Right lobe of liver (tissue), 6 donors: ENCODE measurements at regions of chr17 and their contacts with region 1.

Region 1: DNA sequence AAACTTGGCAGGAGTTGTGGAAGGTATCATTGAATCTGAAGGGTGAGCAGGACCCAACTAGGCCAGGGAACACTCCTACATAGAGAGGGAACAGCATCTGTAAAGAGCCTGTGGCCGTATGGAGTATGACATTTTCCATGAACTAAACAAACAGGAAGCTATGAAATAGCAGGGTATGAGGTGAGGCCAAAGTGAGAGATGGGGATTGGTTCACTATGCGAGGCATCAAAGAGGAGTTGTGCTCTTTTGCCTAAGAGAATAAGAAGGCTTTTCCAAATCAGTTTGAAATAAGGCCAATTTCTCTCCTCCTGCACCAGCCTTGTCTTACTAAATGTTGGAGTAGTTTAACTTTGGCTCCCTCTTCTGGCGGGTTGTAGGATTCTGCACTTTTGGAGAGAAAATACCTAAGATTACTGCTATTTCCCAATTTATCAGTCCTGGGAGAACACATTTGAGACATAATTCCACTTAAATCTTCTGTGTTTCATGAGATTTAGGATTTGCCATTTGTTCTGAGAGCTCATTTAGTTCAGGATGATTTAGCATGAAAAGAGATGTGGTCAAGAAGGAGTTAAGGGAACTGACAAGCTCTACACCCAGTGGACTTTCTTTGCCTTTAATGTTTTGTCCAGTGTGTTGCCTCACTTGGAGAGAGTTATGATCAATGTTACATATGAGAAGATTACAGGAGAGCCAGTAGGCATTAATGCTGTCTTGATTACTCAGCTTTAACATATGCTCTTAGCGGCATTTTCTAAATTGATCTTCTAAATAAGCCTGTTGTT is 55.4 kb downstream of the TNRC6C start:
- DNase-seq: peak in 1 of 3 donors; percentile 54
- ATAC-seq: peak; percentile 78 to 86 (median 82)
- H3K4me3 ChIP-seq: no peak overlapping the region
- H3K27ac ChIP-seq: no peak overlapping the region
- H3K4me1 ChIP-seq: no peaks in the 10 kb centered on the region
- H3K27me3 ChIP-seq: no peaks in the 10 kb centered on the region
- CTCF ChIP-seq: peak; percentile 68 to 81 (median 74)
- POLR2A ChIP-seq: no peak

Region 2: DNA sequence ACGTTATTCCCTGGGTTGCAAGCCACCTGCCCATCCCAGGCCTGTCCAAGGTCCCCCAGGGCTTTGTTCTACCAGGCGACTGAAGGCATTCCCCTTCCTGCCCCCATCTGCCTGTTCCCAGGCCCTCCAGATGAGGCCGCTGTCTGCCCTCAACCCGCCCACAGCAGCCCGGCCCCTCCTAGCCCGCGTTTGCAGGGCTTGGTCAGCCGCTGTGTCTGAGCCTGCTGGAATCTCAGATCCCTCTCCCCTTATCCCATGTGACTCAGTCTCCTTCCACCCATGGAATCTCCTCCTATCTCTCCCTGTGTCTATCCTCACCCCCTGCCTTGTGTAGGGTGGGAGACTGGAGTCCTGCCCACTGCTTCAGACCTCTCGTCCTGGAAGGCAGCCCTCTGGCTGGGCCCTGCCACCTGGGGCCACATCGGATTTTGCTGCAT is 241.4 kb before region 1 on chr17:
- intact Hi-C with region 1: loop called in 1 of 2 experiments (anchors 10 kb)
- DNase-seq: peak; percentile 58 to 67 (median 65)
- ATAC-seq: peak; percentile 79 to 95 (median 89)
- H3K4me3 ChIP-seq: no peak overlapping the region
- H3K27ac ChIP-seq: no peak overlapping the region
- H3K4me1 ChIP-seq: no peaks in the 10 kb centered on the region
- H3K27me3 ChIP-seq: no peaks in the 10 kb centered on the region
- CTCF ChIP-seq: peak; percentile 48 to 68 (median 61)
- POLR2A ChIP-seq: no peak

Region 3: DNA sequence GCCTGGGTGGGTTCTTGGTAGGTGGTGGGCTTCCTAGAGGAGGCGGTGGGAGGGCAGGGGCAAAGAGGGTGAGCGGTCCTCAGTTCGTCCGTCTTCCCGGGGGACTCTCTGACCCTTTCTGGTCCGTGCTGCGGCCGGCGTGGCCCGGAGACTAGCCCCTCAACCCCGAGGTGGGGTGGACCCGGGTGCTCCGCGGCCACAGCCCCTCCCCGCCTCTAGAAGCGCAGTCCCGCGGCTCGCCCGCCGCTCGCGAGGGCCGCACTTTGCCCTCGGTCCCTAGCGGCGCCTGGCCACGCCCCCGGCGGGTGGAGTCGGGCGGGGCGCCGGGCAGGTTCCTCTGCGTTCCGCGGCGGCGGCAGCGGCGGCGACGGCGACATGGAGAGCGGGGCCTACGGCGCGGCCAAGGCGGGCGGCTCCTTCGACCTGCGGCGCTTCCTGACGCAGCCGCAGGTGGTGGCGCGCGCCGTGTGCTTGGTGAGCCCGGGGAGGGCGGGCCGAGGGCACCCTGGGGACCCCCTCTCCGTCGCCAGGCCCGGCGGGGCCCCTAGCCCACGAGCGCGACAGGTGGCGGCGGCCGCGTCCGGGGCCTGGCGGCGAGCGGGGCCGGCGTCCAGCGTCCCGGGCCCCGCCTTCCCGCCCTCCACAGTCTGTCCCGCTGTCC is 154.5 kb after region 1 on chr17 and contains the start of gene SYNGR2:
- intact Hi-C with region 1: no loop called
- DNase-seq: peak; percentile 90 to 92 (median 91)
- ATAC-seq: peak; percentile 78 to 94 (median 84)
- H3K4me3 ChIP-seq: peak within 1 kb of the TSS; percentile 38 to 79 (median 66)
- H3K27ac ChIP-seq: peak within 1 kb of the TSS; percentile 57 to 67 (median 62)
- H3K4me1 ChIP-seq: peaks cover 0 to 7% (median 0%) of the 10 kb centered on the region in 4 donors
- H3K27me3 ChIP-seq: no peaks in the 10 kb centered on the region
- CTCF ChIP-seq: peak in 2 of 4 donors; percentile 5 to 7
- POLR2A ChIP-seq: peak; percentile 89
- total RNA-seq, gene SYNGR2: 43.3 to 55.8 (median 50.4) TPM